MCF 10A (cell line): ENCODE measurements at regions of chr1 and their contacts with region 1.

Region 1: GRCh38 chr1:211885747-211886522 is 55.4 kb upstream of the LPGAT1 start:
- DNase-seq: no peak
- H3K4me3 Mint-ChIP-seq: no peak overlapping the region
- H3K27ac Mint-ChIP-seq: no peak overlapping the region
- H3K4me1 Mint-ChIP-seq: peaks cover 16% of the 10 kb centered on the region
- H3K27me3 Mint-ChIP-seq: no peaks in the 10 kb centered on the region
- CTCF ChIP-seq: no peak

Region 2: GRCh38 chr1:211229365-211229759 is 656.6 kb before region 1 on chr1:
- CTCF ChIA-PET with region 1: no interaction called
- POLR2A ChIA-PET with region 1: no interaction called
- intact Hi-C with region 1: no loop called
- DNase-seq: no peak
- H3K4me3 Mint-ChIP-seq: no peak overlapping the region
- H3K27ac Mint-ChIP-seq: no peak overlapping the region
- H3K4me1 Mint-ChIP-seq: no peaks in the 10 kb centered on the region
- H3K27me3 Mint-ChIP-seq: no peaks in the 10 kb centered on the region
- CTCF ChIP-seq: no peak

Region 3: GRCh38 chr1:211908453-211908852 is 22.5 kb after region 1 on chr1:
- CTCF ChIA-PET with region 1: interaction called, 3 read pairs
- POLR2A ChIA-PET with region 1: interaction called, 10 read pairs
- intact Hi-C with region 1: no loop called
- DNase-seq: no peak
- H3K4me3 Mint-ChIP-seq: no peak overlapping the region
- H3K27ac Mint-ChIP-seq: no peak overlapping the region
- H3K4me1 Mint-ChIP-seq: peaks cover 7% of the 10 kb centered on the region
- H3K27me3 Mint-ChIP-seq: peaks cover 15% of the 10 kb centered on the region
- CTCF ChIP-seq: no peak

Region 4: DNA sequence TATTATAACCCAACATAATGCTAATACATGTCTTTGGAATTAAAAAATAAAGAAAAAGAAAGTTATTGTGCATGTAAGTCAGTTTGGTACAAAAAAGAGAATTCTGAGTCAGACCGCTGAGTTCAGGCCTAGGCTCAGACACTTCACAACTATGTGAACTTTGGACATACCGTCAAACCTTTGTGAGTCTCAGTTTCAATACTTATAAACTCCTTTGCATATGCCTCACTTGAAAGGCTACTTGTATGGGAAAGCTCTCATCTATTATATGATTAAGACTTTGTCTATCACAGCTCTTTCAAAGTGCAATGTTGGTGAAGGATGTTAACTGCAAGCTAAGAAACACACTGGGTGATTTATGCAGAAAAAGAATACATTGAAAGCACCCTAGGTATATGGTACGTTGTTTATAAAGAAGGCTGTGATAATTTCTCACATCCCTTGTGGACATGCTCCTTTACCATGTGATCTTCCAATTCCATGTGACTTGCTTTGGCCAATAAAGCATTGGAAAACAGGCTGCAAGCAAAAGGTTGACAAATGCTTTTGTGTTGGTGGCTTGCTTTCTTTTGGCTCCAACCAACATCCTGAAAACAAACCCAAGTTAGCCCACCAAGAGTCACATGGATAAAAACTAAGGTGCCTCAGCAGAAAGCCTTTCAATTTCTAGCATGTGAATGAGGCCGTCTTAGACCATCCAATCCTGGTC is 99.8 kb after region 1 on chr1:
- CTCF ChIA-PET with region 1: no interaction called
- POLR2A ChIA-PET with region 1: no interaction called
- intact Hi-C with region 1: no loop called
- DNase-seq: no peak
- H3K4me3 Mint-ChIP-seq: no peak overlapping the region
- H3K27ac Mint-ChIP-seq: no peak overlapping the region
- H3K4me1 Mint-ChIP-seq: no peaks in the 10 kb centered on the region
- H3K27me3 Mint-ChIP-seq: no peaks in the 10 kb centered on the region
- CTCF ChIP-seq: no peak

Region 5: DNA sequence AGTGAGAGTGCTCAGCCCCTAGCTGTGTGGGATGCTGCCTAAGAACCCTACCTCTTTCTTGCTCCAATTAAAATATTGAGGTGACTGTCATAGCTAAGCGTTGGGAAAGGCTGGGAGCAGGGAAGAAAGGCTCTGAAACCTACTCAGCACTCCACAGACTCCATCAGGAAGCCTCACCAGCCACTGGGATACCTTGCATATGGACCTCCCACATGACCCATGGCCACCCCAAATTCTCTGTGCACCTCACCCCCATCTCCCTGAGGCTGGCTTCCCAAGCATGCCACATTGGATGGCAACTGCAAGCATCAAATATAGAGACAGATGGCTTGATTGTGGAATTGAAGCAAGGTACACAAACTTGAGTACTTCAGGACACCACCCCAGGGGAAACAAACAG is 1013.9 kb after region 1 on chr1:
- CTCF ChIA-PET with region 1: no interaction called
- POLR2A ChIA-PET with region 1: no interaction called
- intact Hi-C with region 1: no loop called
- DNase-seq: no peak
- H3K4me3 Mint-ChIP-seq: no peak overlapping the region
- H3K27ac Mint-ChIP-seq: no peak overlapping the region
- H3K4me1 Mint-ChIP-seq: no peaks in the 10 kb centered on the region
- H3K27me3 Mint-ChIP-seq: no peaks in the 10 kb centered on the region
- CTCF ChIP-seq: no peak